Activated CD4-positive, alpha-beta T cell treated with anti-CD3 and anti-CD28 coated beads, Interleukin-2, amount 10 ng/mL, durations not matched to agents 24 days and 14 days (primary cell): ENCODE measurements at regions of chr10 and their contacts with region 1.

Region 1: DNA sequence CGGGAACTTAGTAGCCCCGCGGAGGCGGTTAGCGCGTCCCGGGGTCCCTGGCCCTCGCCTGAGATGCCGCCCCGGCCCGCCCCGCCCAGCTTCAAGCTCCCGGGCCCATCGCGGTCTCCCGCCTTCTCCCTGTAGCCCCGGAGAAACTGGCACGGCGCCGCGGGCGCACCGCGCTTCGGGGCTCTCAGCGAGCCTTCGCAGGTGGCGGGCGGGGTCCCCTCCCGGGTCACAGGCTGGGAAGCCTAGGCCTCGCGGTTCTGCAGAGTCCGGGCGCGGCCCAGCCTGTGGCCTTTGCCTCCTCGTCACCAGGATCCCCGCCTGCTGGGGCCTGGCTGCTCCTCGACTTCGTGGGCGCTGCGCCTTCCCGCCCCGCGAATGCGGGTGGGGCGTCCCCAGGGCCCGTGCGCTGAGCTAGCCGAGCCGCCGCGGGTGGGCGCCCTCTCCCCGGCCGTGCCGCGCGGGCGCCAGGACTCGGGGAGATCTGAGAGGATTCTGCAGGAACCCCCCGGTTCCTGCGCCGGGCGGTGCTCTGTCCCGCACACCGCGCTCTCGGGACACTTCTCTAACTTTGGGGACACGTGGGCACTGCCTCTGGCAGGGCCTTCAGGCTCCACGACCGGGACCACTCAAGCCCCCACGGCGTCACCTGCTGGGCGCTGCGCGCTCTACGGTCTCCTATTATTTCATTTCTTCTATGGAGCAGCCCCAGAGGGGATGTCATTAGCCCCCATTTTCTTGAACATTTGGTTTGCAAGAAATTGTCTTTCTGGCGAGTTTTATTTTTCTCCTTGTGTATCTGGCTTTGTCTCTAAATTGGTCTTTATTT is 682 bp upstream of the RGS10 start:
- DNase-seq: peak; percentile 89
- H3K4me3 Mint-ChIP-seq: peak overlapping the region; percentile 79
- H3K27ac Mint-ChIP-seq: peak overlapping the region; percentile 91
- H3K4me1 Mint-ChIP-seq: peaks cover 35% of the 10 kb centered on the region
- H3K27me3 Mint-ChIP-seq: peaks cover 20% of the 10 kb centered on the region

Region 2: GRCh38 chr10:119080521-119081260 is 462.5 kb before region 1 on chr10 and contains the start of gene EIF3A:
- intact Hi-C with region 1: loop called (anchors 2 kb)
- DNase-seq: peak; percentile 99
- H3K4me3 Mint-ChIP-seq: peak within 1 kb of the TSS; percentile 87
- H3K27ac Mint-ChIP-seq: peak within 1 kb of the TSS; percentile 92
- H3K4me1 Mint-ChIP-seq: peaks cover 29% of the 10 kb centered on the region
- H3K27me3 Mint-ChIP-seq: no peaks in the 10 kb centered on the region
- total RNA-seq, gene EIF3A: 179 and 183 TPM in 2 replicates

Region 3: GRCh38 chr10:119199231-119199992 is 343.8 kb before region 1 on chr10:
- intact Hi-C with region 1: loop called (anchors 2 kb)
- DNase-seq: peak; percentile 86
- H3K4me3 Mint-ChIP-seq: peak overlapping the region; percentile 10
- H3K27ac Mint-ChIP-seq: no peak overlapping the region
- H3K4me1 Mint-ChIP-seq: peaks cover 34% of the 10 kb centered on the region
- H3K27me3 Mint-ChIP-seq: no peaks in the 10 kb centered on the region

Region 4: GRCh38 chr10:119517235-119518141 is 25.7 kb before region 1 on chr10:
- intact Hi-C with region 1: loop called (anchors 1 kb)
- DNase-seq: peak; percentile 87
- H3K4me3 Mint-ChIP-seq: peak overlapping the region; percentile 75
- H3K27ac Mint-ChIP-seq: peak overlapping the region; percentile 90
- H3K4me1 Mint-ChIP-seq: peaks cover 48% of the 10 kb centered on the region
- H3K27me3 Mint-ChIP-seq: no peaks in the 10 kb centered on the region

Region 5: DNA sequence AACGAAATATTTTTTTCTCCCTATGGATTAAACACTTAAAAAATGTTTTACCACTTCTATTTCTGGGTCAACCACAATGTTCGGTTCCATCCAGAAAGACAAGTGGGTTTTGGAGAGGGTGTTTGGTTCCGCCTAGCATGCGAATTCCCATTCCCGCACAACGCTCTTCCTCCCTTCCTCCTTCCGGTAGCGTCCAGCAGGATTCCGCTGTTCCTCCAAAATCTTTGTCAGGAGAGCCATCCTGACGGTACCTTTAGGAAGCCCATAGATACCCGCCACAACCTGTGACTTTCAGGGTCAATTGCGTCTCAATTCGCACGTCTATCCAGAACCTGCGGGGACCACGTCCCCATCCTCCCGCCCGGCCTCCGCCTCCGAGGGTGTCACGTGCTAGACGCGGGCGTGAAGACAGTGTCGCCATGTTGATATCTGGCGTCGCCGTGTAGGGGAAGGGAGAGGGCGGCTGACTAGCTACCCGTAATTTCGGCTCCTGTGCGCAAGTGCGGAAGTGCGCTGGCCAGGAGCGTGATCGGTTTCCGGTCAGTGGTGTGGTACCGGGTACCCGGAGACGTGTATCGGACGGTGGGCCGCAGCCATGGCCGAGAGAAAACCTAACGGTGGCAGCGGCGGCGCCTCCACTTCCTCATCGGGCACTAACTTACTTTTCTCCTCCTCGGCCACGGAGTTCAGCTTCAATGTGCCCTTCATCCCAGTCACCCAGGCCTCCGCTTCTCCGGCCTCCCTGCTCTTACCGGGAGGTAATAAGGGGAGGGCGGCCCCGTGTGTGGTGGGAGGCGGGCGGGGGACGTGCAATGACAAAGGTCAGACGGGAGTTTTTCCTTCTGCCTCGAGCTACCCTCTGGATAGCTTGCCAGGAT is 349.2 kb after region 1 on chr10 and contains the start of gene SEC23IP:
- intact Hi-C with region 1: loop called (anchors 1 kb)
- DNase-seq: peak; percentile 98
- H3K4me3 Mint-ChIP-seq: peak within 1 kb of the TSS; percentile 98
- H3K27ac Mint-ChIP-seq: peak within 1 kb of the TSS; percentile 95
- H3K4me1 Mint-ChIP-seq: peaks cover 32% of the 10 kb centered on the region
- H3K27me3 Mint-ChIP-seq: peaks cover 2% of the 10 kb centered on the region
- total RNA-seq, gene SEC23IP: 78.0 and 90.3 TPM in 2 replicates